ENCODE measurements at regions of chr6 and their contacts with region 1.

Region 1: DNA sequence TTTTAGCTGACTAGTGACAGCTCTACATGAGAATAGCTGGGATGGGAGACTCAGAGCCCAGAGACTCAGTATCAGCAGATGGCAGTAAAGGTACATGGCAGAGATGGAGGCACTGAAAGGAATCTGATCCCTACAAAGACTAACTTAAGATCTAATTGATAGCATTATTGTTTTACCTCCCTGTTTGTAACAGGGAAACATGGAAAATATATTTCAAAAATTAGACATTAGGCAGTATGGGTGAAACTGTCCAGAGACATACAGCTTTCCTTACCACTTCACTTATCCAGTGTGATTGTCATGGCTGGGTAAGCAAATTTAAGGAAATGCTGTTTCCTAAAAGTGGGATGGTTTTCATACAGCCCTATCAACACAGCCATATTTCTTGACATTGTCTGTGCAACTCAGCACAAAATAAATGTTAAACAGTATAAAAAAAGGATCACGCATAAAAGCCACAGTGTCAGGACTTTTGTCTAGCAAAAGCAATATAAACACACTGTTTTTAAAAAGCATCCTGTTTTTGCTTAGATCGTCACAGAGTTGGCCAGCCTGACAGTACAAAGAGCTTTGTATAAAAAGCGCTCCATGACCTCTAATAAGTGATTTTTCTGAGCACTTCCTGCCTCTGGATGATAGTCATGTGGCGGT is 376.9 kb downstream of the PHF3 start:
- DNase-seq: peak; percentile 75
- H3K4me3 ChIP-seq: no peak overlapping the region; a peak in 1 of 4 replicates
- H3K27ac ChIP-seq: peak overlapping the region in 1 of 2 experiments; percentile 80; a peak in 2 of 4 replicates
- H3K4me1 ChIP-seq: no peaks in the 10 kb centered on the region; a peak in 2 of 4 replicates
- H3K27me3 ChIP-seq: no peaks in the 10 kb centered on the region
- CTCF ChIP-seq: peak; percentile 97
- EP300 ChIP-seq: peak in 1 of 2 experiments; percentile 64; a peak in 2 of 4 replicates
- RAD21 ChIP-seq: peak; percentile 99

Region 2: GRCh38 chr6:64000873-64001491 is 11.5 kb before region 1 on chr6:
- CTCF ChIA-PET with region 1: interaction called, 12 read pairs
- POLR2A ChIA-PET with region 1: no interaction called
- DNase-seq: no peak
- H3K4me3 ChIP-seq: no peak overlapping the region
- H3K27ac ChIP-seq: no peak overlapping the region
- H3K4me1 ChIP-seq: no peaks in the 10 kb centered on the region; a peak in 1 of 4 replicates
- H3K27me3 ChIP-seq: no peaks in the 10 kb centered on the region
- CTCF ChIP-seq: no peak
- EP300 ChIP-seq: no peak
- RAD21 ChIP-seq: no peak

Region 3: DNA sequence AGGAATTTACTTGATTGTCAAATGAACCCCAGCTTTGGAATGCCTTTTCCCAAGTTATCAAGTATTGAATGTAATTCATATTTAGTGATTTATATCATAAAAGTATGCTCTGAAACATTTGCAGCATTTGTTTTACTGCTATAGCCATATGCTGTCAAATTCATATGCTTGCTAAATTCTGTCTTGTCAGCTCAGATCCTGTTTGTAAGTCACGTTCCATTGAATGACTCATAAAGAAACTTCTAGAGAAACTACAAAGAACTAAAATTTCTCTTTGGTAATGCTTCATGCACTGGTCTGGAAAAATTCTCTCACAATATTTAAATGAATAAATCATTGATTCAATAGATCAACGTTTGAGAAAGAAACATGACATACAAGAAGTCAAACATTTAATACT is 69.0 kb after region 1 on chr6:
- CTCF ChIA-PET with region 1: no interaction called
- POLR2A ChIA-PET with region 1: no interaction called
- DNase-seq: no peak
- H3K4me3 ChIP-seq: no peak overlapping the region
- H3K27ac ChIP-seq: peak overlapping the region in 1 of 2 experiments; percentile 11; a peak in 1 of 4 replicates
- H3K4me1 ChIP-seq: no peaks in the 10 kb centered on the region
- H3K27me3 ChIP-seq: no peaks in the 10 kb centered on the region
- CTCF ChIP-seq: no peak
- EP300 ChIP-seq: no peak
- RAD21 ChIP-seq: no peak

Region 4: DNA sequence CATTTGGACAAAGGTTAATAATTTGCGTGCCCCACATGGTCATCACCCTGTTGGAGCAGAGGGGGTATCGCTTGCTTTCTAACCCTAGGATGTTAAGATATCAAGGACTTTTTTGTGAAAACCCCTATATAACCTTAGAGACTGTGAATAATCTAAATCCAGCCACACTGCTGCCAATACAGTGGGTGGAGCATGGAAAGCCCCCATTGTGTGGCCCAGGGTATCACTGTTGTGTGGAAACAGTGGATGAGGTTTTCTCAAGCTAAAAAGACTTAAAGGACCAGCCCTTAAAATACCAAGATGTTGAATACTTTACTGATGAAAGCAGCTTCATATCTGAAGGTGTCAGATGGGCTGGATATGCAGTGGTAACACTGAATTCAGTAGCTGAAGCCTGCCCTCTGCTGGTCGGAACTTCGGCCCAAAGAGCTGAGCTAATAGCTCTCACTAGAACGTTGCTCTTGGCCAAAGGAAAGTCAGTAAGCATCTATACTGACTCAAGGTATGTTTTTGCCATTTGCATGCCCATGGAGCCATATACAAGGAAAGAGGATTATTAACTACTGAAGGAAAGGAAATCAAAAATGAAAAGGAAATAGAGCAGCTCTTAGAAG is 318.3 kb after region 1 on chr6:
- CTCF ChIA-PET with region 1: interaction called, 52 read pairs
- POLR2A ChIA-PET with region 1: no interaction called
- DNase-seq: no peak
- H3K4me3 ChIP-seq: no peak overlapping the region
- H3K27ac ChIP-seq: no peak overlapping the region
- H3K4me1 ChIP-seq: no peaks in the 10 kb centered on the region
- H3K27me3 ChIP-seq: no peaks in the 10 kb centered on the region
- CTCF ChIP-seq: peak; percentile 78
- EP300 ChIP-seq: no peak
- RAD21 ChIP-seq: peak; percentile 81